ENCODE measurements at regions of chr9 and their contacts with region 1.

Region 1: DNA sequence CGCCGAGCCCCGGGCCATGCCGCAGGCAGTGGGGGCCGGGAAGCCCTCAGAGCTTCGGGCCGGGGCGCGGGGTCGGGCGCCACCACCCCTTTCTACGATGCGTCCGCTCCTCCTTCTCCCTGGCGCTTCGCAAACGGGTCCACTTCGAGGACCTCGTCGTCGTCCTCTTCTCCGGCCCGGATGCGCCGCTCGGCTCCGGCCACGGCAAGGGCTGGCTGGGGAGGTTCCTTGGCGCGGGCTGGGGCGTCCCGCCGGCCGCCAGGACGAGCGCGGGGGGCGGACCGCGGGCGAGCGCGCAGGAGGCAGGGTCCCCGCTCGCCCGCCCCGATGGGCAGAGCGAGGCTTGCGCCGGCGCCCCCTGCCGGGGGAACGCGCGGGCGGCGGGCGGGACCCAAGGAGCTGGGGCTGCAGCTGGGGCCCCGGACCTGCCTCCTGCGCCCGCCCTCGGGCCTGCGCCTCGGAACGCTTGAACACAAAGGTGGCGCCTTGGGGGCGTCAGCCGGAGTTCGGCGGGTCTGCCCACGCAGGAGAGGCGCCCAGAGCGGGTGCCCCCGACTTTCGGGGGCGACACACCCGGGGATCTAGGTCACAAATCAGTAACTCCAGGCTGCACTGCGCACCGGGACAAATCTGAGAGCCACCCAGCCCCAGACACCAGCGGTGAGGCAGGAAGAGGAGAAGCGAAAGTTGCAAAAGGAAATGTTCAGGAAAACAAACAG is at the start of gene ROR2:
- DNase-seq: peak in 1 of 10 donors; percentile 53
- H3K4me3 ChIP-seq: peak within 1 kb of the TSS in 57 of 59 donors; percentile 15 to 63 (median 43)
- H3K27ac ChIP-seq: no peak within 1 kb of the TSS
- H3K27me3 ChIP-seq: peaks cover 0 to 75% (median 48%) of the 10 kb centered on the region in 45 donors
- CTCF ChIP-seq: peak in 43 of 56 donors; percentile 11 to 68 (median 39)
- total RNA-seq, gene ROR2: 0.16 to 3.9 (median 1.2) TPM in 118 of 120 experiments, not detected in the others

Region 2: DNA sequence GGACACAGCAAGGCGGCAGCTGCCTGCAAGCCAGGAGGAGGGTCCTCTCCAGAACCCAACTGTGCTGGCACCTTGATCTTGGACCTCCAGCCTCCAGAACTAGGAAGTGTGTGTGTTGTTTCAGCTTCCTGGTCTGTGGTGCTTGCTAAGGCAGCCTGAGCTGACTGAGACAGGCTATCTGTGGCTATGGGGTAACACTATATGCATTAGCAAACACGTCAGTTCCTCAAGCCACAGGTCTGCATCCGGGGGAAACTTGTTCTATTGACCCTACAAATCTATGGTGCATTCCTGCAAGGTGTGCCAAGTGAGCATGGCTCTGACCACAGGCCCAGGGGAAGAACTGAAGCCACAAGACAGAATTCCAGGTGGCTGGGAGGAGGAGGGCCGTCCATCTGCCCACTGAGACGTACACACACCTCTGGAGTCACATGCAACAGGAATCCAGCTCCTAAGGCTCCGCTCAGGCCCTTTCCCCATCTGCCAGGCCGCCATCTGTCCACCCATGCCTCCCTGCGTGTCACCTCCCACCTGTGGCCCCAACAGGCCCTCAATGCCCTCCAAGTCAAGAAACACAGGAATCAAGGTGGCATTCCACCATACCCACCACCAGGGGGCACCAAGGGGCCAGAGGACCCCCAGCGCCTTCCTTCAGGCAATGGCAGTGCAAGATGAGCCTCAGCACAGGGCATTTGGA is 174.9 kb before region 1 on chr9:
- intact Hi-C with region 1: loop called (anchors 2 to 10 kb)
- DNase-seq: peak in 8 of 10 donors; percentile 12 to 67 (median 52)
- H3K4me3 ChIP-seq: no peak overlapping the region
- H3K27ac ChIP-seq: no peak overlapping the region
- H3K27me3 ChIP-seq: peaks cover 0 to 30% (median 0%) of the 10 kb centered on the region in 45 donors
- CTCF ChIP-seq: peak; percentile 15 to 87 (median 76)

Region 3: DNA sequence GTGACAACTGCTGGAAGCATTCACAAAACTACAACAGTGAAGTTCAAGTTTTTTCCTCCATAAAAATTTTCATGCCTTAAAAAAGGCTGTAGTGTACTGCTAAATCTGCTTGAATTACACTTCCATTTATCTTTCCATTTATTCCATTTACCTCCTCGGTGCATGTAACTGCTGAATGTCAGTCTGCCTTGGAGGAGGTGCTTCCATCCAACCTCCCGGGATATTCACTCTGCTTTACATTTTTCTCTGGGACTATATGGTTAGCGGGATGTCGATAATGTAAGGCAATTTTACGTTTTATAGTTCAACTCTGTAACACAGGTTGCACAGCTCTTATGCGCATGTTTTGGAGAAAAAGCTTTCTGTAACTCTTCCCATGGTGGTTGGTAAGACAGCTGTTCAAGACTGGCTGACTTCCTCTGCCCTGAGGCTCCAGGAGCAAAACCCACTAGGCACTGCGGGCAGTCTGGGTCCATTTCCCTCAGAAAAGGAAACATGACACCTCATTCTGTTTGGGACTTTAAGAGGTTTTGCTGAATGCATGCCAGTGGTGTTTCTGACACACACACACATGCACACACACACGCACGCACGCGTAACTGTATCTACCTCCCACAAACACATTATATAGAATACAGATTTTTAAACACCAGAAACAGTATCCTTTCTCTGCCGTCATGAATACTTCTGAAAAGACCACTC is 99.0 kb after region 1 on chr9:
- intact Hi-C with region 1: no loop called
- DNase-seq: no peak
- H3K4me3 ChIP-seq: no peak overlapping the region
- H3K27ac ChIP-seq: no peak overlapping the region
- H3K27me3 ChIP-seq: no peaks in the 10 kb centered on the region
- CTCF ChIP-seq: no peak

Measured in dorsolateral prefrontal cortex (tissue), 120 donors.